Common myeloid progenitor, CD34-positive (primary cell): ENCODE measurements at regions of chr12 and their contacts with region 1.

Region 1: DNA sequence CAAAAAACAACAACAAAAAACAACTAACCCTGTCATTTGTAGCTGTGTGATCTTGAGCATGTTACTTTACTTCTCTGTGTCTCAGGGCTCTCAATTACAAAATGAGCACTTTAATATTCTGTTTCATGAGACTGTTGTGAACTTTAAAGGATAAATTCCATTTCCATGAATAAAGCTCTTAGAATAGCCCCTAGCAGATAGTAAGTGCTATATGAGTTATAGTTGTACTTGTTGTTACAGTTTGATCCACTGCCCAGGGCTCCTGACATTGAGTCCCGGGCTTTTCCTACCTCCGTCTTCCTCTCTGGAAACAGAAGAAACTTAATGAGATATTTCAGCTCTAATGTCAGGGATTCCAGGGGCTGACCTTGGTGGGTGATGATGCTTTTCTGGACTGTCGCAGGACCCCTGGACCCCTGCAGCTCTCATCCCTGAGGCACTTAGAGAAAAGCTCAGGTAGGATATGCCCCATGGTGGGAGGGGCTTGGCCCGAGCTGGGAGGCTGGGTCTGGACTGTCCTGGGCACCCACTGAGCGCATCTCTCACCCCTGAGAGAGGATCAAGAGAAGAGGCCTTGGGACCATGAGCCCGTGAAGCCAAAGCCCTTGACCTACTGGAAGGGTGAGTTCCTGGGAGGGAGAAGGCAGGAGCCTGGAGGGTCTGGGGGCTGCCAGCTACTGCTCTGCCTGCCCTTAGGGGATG is 5.1 kb downstream of the P3H3 start:
- DNase-seq: no peak
- H3K4me3 ChIP-seq: no peak overlapping the region
- H3K27ac ChIP-seq: no peak overlapping the region
- H3K4me1 ChIP-seq: peaks cover 0 to 15% (median 13%) of the 10 kb centered on the region in 4 experiments
- H3K27me3 ChIP-seq: peaks cover 0 to 7% (median 0%) of the 10 kb centered on the region in 5 experiments

Region 2: GRCh38 chr12:6323340-6323994 is 509.9 kb before region 1 on chr12:
- CTCF ChIA-PET with region 1: no interaction called
- POLR2A ChIA-PET with region 1: no interaction called
- DNase-seq: peak; percentile 82 to 87 (median 86)
- H3K4me3 ChIP-seq: peak overlapping the region in 5 of 7 experiments; percentile 12 to 64 (median 46)
- H3K27ac ChIP-seq: peak overlapping the region; percentile 37 to 68
- H3K4me1 ChIP-seq: peaks cover 12 to 56% (median 51%) of the 10 kb centered on the region in 4 experiments
- H3K27me3 ChIP-seq: no peaks in the 10 kb centered on the region

Region 3: DNA sequence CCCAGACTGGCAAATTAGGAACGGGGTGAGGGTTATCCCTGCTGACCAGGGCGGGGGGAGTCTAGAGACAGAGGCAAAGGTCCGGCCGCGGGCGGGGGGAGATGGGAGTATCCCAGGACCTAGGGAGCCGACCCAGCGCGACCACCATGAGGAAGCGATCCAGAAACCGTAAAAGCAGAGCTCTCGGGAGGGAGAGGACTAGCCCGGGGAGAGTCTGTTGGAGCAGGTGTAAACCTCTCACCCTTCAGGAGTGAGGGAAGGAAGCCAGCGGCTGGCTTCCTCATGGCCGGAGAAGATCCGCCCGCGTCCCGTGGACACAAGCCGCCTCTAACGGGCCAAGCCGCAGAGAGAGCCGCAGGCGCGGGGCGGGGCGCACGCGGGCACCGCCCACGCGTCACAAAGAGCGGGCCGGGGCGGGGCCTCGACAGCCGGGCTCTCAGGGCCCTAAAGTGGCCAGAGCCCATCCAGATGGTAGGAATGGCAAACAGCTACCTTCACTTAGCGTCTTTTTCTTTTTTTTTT is 186.2 kb before region 1 on chr12 and contains the start of gene ACRBP:
- CTCF ChIA-PET with region 1: no interaction called
- POLR2A ChIA-PET with region 1: no interaction called
- DNase-seq: peak; percentile 51 to 71 (median 65)
- H3K4me3 ChIP-seq: peak within 1 kb of the TSS; percentile 14 to 91 (median 77)
- H3K27ac ChIP-seq: peak within 1 kb of the TSS in 1 of 2 experiments; percentile 73
- H3K4me1 ChIP-seq: peaks cover 3 to 29% (median 15%) of the 10 kb centered on the region in 4 experiments
- H3K27me3 ChIP-seq: no peaks in the 10 kb centered on the region

Region 4: GRCh38 chr12:6851921-6852650 is 18.7 kb after region 1 on chr12 and contains the start of gene USP5:
- CTCF ChIA-PET with region 1: interaction called, 39 read pairs
- POLR2A ChIA-PET with region 1: interaction called, 3 read pairs
- DNase-seq: peak; percentile 100
- H3K4me3 ChIP-seq: peak within 1 kb of the TSS; percentile 82 to 99 (median 90)
- H3K27ac ChIP-seq: peak within 1 kb of the TSS; percentile 80 to 89
- H3K4me1 ChIP-seq: peaks cover 5 to 41% (median 32%) of the 10 kb centered on the region in 4 experiments
- H3K27me3 ChIP-seq: no peaks in the 10 kb centered on the region

Region 5: GRCh38 chr12:6987948-6988553 is 154.7 kb after region 1 on chr12:
- CTCF ChIA-PET with region 1: no interaction called
- POLR2A ChIA-PET with region 1: no interaction called
- DNase-seq: no peak
- H3K4me3 ChIP-seq: no peak overlapping the region
- H3K27ac ChIP-seq: no peak overlapping the region
- H3K4me1 ChIP-seq: no peaks in the 10 kb centered on the region
- H3K27me3 ChIP-seq: no peaks in the 10 kb centered on the region